ENCODE measurements at regions of chr9 and their contacts with region 1.

Region 1: DNA sequence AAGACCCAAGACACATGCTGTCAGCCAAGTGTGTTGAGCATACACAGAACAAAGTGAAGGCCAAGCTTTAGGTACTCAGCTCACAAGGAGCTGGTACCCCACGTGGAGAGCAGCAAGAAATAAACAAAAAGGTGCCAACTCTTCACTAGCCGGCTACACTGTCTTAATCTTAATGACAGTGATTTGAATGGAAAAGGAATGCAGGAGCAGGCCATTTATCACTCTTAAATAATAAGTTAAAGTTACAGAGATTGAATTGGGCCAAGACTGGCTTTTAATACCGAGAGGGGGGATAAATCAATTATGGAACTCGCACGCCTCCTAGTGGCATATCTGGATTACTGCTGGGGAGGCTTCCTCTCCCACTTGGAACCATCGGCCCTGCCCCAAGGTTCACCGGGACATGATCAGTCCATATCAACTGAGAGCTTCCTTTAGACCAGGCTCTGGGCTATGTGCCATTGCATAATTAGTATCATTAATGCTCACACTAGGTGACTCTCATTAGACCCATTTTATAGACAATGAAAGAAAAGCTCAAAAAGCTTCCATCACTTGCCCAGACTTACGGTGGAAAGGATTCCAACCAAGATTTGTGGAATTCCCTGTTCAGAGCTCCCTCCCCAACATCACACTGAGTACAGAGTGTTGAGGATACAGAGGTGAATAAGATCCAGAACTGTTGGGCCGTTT is 94.0 kb downstream of the ACTL7B start:
- DNase-seq: peak; percentile 47
- ATAC-seq: peak; percentile 93
- H3K4me3 ChIP-seq: peak overlapping the region in 2 of 3 experiments; percentile 41; a peak in 3 of 6 replicates
- H3K27ac ChIP-seq: no peak overlapping the region
- H3K4me1 ChIP-seq: peaks cover 16% of the 10 kb centered on the region
- H3K27me3 ChIP-seq: no peaks in the 10 kb centered on the region
- CTCF ChIP-seq: peak; percentile 87
- EP300 ChIP-seq: no peak
- POLR2A ChIP-seq: no peak
- RAD21 ChIP-seq: peak; percentile 82

Region 2: DNA sequence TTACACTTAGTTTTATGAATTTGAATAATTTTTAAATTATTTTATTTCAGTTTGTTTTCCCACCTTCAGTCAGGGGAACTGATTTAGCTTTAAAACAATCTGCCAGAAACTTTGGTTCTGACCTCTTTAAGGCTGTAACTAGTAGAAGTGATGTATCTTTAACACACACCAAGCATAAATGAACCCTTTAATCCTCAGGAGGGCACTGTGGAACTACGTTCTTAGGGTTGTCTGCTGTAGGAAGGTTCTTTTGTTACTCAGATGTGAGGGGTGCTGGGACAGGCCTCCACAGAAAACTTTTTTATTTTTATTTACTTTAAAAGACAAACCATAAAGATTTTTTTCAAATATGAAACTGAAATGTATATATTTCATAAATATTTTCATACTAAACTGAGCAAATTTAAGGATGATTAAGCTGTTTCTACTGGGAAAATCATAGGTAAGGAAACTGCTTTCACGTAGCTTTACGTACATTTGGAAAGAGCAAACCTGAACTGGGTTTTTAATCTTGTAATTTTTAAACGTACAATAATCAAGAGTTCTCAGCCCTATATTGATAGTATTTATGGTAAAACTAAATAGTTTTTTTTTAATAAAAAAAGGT is 1277.6 kb before region 1 on chr9:
- CTCF ChIA-PET with region 1: no interaction called
- POLR2A ChIA-PET with region 1: no interaction called
- in situ Hi-C with region 1: no loop called
- intact Hi-C with region 1: loop called (anchors 1 kb)
- DNase-seq: peak; percentile 68
- ATAC-seq: peak; percentile 82
- H3K4me3 ChIP-seq: no peak overlapping the region
- H3K27ac ChIP-seq: no peak overlapping the region
- H3K4me1 ChIP-seq: no peaks in the 10 kb centered on the region
- H3K27me3 ChIP-seq: peaks cover 0 to 13% of the 10 kb centered on the region in 2 experiments; a peak in 3 of 5 replicates
- CTCF ChIP-seq: peak; percentile 72
- EP300 ChIP-seq: no peak
- POLR2A ChIP-seq: no peak
- RAD21 ChIP-seq: peak; percentile 48; the same call in 1 of the 2 replicates

Region 3: DNA sequence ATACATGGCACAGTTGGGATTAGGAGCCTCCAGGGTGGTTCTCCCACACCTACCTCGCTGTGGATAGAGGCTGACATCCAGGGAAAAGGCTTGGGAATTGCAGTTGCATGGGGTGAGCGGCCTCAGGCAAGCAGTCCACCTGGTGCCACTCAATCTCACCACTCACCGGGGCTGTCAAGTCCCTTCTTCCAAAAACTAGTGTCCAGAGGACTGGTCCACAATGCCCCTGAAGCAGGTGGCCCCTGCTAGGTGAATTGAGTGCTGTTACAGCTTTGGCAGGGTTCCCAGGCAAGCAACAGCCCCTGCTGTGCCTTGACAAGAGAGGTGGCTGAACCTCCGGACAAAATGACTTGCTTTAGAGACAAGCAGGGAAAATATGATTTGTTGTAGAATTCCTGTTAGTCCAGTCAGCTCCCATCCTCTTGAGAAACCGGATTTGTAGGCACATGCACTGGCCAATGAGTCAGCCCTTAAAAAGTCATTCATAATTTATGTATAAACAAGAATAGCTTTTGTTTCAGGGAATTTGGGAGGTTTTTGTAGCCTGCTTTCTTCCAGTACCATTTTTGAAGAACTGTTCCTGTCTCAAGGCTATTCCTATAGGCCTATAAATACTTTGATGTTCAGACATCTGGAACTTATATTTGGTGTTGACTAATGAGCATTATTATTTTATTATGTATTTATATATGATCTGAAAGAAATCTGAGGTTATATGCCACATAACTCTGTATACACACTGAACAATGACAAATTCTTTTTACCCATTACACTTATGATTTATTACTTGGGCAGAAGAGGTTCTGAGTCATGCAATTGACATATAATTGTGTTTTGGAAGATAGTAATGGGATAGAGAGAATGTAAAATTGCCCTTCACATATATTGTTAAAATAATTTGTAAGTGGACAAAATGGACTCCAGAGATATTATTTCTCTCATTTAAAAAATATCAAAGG is 317.1 kb before region 1 on chr9:
- CTCF ChIA-PET with region 1: no interaction called
- POLR2A ChIA-PET with region 1: no interaction called
- in situ Hi-C with region 1: loop called (anchors 25 kb)
- intact Hi-C with region 1: no loop called
- DNase-seq: peak; percentile 72
- ATAC-seq: no peak
- H3K4me3 ChIP-seq: peak overlapping the region in 1 of 3 experiments; percentile 7; a peak in 1 of 6 replicates
- H3K27ac ChIP-seq: peak overlapping the region; percentile 82
- H3K4me1 ChIP-seq: peaks cover 66% of the 10 kb centered on the region
- H3K27me3 ChIP-seq: no peaks in the 10 kb centered on the region
- CTCF ChIP-seq: peak; percentile 21; the same call in 1 of the 2 replicates
- EP300 ChIP-seq: no peak; a peak in 1 of 4 replicates
- POLR2A ChIP-seq: no peak
- RAD21 ChIP-seq: no peak

Region 4: GRCh38 chr9:108704156-108704852 is 57.5 kb before region 1 on chr9:
- CTCF ChIA-PET with region 1: no interaction called
- POLR2A ChIA-PET with region 1: no interaction called
- in situ Hi-C with region 1: no loop called
- intact Hi-C with region 1: no loop called
- DNase-seq: no peak
- ATAC-seq: no peak
- H3K4me3 ChIP-seq: no peak overlapping the region
- H3K27ac ChIP-seq: no peak overlapping the region
- H3K4me1 ChIP-seq: no peaks in the 10 kb centered on the region
- H3K27me3 ChIP-seq: peaks cover 0 to 4% of the 10 kb centered on the region in 2 experiments; a peak in 1 of 5 replicates
- CTCF ChIP-seq: no peak
- EP300 ChIP-seq: no peak
- POLR2A ChIP-seq: no peak
- RAD21 ChIP-seq: no peak

Region 5: DNA sequence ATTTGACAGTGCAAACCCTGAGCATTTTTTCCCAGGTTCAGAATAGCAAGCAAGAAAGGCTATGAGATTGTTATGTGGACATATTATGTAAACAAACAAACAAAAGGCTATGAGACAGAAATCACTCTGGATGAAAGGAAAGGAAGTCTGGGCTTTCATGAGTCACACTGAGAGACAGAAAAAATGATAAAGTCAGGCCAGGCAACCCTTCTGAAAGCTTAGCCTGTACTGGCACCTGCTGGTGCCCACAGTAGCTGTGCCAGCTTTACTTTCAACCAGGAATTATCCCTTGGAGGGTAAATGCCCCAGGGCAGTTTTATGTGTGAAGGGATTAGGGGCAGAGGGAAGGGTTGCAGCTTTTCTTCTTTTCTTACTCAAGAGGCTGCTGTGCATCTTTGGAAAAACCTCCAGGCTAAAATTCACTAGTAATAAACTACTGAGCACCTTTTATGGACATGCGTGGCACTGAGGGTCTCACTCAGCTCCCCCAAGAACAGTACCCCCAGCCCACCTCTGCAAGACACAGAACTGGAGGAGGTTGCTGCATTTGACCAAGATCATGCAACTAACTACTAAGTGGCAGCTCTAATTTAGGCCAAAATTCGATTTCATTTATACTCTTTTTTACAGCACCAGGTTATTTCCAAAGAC is 52.3 kb after region 1 on chr9:
- CTCF ChIA-PET with region 1: no interaction called
- POLR2A ChIA-PET with region 1: no interaction called
- in situ Hi-C with region 1: no loop called
- intact Hi-C with region 1: loop called (anchors 5 kb)
- DNase-seq: peak; percentile 58
- ATAC-seq: peak; percentile 74
- H3K4me3 ChIP-seq: no peak overlapping the region
- H3K27ac ChIP-seq: no peak overlapping the region
- H3K4me1 ChIP-seq: peaks cover 62% of the 10 kb centered on the region
- H3K27me3 ChIP-seq: no peaks in the 10 kb centered on the region
- CTCF ChIP-seq: peak; percentile 68
- EP300 ChIP-seq: no peak
- POLR2A ChIP-seq: no peak
- RAD21 ChIP-seq: peak; percentile 63; the same call in 1 of the 2 replicates

Measured in HepG2 (cell line).